ENCODE measurements at regions of chr20 and their contacts with region 1.

Region 1: GRCh38 chr20:48523212-48523941 is 304.4 kb downstream of the PREX1 start:
- DNase-seq: no peak
- H3K4me3 ChIP-seq: no peak overlapping the region
- H3K27ac ChIP-seq: no peak overlapping the region
- H3K4me1 ChIP-seq: no peaks in the 10 kb centered on the region
- H3K27me3 ChIP-seq: no peaks in the 10 kb centered on the region
- CTCF ChIP-seq: no peak

Region 2: GRCh38 chr20:47809111-47809912 is 714.1 kb before region 1 on chr20:
- intact Hi-C with region 1: loop called (anchors 5 kb)
- DNase-seq: no peak
- H3K4me3 ChIP-seq: no peak overlapping the region
- H3K27ac ChIP-seq: no peak overlapping the region
- H3K4me1 ChIP-seq: no peaks in the 10 kb centered on the region
- H3K27me3 ChIP-seq: no peaks in the 10 kb centered on the region
- CTCF ChIP-seq: no peak

Measured in ascending aorta (tissue), 2 donors.